Natural killer cell (primary cell): ENCODE measurements at regions of chr3 and their contacts with region 1.

Region 1: GRCh38 chr3:124620600-124621063 is 109.6 kb upstream of the UMPS start:
- DNase-seq: peak; percentile 17 to 41
- ATAC-seq: peak; percentile 81 to 90 (median 81)
- H3K4me3 ChIP-seq: no peak overlapping the region
- H3K4me3 Mint-ChIP-seq: peak overlapping the region; percentile 86
- H3K27ac ChIP-seq: peak overlapping the region; percentile 60
- H3K27ac Mint-ChIP-seq: peak overlapping the region; percentile 93 to 94
- H3K4me1 ChIP-seq: peaks cover 22% of the 10 kb centered on the region
- H3K4me1 Mint-ChIP-seq: peaks cover 39 to 44% of the 10 kb centered on the region in 2 donors
- H3K27me3 ChIP-seq: no peaks in the 10 kb centered on the region
- H3K27me3 Mint-ChIP-seq: no peaks in the 10 kb centered on the region
- CTCF ChIP-seq: no peak

Region 2: GRCh38 chr3:123971406-123971805 is 649.2 kb before region 1 on chr3:
- intact Hi-C with region 1: no loop called
- DNase-seq: no peak
- ATAC-seq: no peak
- H3K4me3 ChIP-seq: no peak overlapping the region
- H3K4me3 Mint-ChIP-seq: no peak overlapping the region
- H3K27ac ChIP-seq: no peak overlapping the region
- H3K27ac Mint-ChIP-seq: no peak overlapping the region
- H3K4me1 ChIP-seq: no peaks in the 10 kb centered on the region
- H3K4me1 Mint-ChIP-seq: no peaks in the 10 kb centered on the region
- H3K27me3 ChIP-seq: no peaks in the 10 kb centered on the region
- H3K27me3 Mint-ChIP-seq: peaks cover 28 to 57% of the 10 kb centered on the region in 2 donors
- CTCF ChIP-seq: no peak

Region 3: DNA sequence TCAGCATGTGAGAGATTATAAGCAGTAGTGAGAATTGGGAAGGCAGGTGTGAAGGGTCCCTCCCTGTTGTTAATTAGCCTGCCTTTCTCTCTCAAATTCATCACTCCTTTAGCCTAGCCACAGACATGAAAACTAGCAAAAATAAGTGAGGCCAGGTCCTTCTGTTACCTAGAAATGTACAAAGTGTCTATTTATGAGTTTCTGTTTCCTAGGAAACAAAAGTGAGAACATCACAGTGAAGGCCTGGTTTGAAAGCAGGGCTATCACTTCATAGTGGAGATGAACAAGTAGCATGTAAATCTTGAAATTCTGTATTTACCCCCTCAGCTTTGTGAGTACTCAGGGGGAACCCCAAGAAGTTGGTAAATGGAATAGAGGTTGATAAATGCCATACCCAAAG is 31.4 kb after region 1 on chr3:
- intact Hi-C with region 1: loop called (anchors 1 kb)
- DNase-seq: peak in 1 of 2 donors; percentile 9
- ATAC-seq: peak; percentile 78 to 84 (median 80)
- H3K4me3 ChIP-seq: no peak overlapping the region
- H3K4me3 Mint-ChIP-seq: peak overlapping the region; percentile 49
- H3K27ac ChIP-seq: peak overlapping the region; percentile 54
- H3K27ac Mint-ChIP-seq: peak overlapping the region; percentile 45 to 57
- H3K4me1 ChIP-seq: peaks cover 22% of the 10 kb centered on the region
- H3K4me1 Mint-ChIP-seq: peaks cover 47 to 53% of the 10 kb centered on the region in 2 donors
- H3K27me3 ChIP-seq: no peaks in the 10 kb centered on the region
- H3K27me3 Mint-ChIP-seq: peaks cover 5 to 7% of the 10 kb centered on the region in 2 donors
- CTCF ChIP-seq: no peak

Region 4: DNA sequence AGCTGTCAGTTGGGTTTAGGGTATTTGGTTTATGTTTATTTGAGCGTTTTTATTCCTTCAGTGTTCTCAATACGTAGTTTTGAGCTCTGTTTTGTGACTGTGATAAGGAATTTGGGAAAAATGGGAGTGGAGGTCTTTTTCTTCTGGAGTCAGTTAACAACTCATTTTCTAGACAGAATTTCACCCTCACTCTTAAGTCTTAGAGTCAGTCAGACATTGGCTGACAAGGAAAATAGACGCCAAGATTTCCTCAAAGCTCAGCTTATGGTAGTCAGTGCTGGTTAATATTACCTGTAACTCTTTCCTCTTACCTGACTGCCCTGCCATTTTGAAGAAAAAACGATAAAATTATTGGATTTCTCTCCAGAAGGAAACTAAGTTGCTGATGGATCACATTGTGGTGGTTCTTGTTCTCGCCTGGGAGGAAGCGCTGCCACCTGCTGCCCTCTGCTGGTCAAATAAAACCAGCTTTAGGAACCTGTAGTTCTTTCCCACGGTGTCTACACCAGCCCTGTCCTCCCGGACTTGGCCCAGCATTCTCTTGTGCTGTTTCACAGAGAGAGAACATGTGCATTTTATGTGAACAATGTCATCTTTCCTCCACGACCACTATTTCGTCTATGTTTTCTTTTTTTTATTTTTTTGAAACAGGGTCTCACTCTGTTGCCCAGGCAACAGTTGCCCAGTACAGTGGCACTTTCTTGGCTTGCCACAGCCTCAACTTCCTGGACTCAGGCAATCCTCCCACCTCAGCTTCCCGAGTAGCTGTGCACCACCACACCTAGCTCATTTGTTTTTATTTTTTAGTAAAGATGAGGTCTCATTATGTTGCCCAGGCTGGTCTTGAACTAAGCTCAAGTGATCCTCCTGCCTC is 68.2 kb after region 1 on chr3:
- intact Hi-C with region 1: loop called (anchors 1 kb)
- DNase-seq: peak; percentile 65 to 82
- ATAC-seq: peak; percentile 79 to 98 (median 97)
- H3K4me3 ChIP-seq: no peak overlapping the region
- H3K4me3 Mint-ChIP-seq: no peak overlapping the region
- H3K27ac ChIP-seq: no peak overlapping the region
- H3K27ac Mint-ChIP-seq: no peak overlapping the region
- H3K4me1 ChIP-seq: peaks cover 5% of the 10 kb centered on the region
- H3K4me1 Mint-ChIP-seq: peaks cover 6 to 12% of the 10 kb centered on the region in 2 donors
- H3K27me3 ChIP-seq: no peaks in the 10 kb centered on the region
- H3K27me3 Mint-ChIP-seq: peaks cover 0 to 3% of the 10 kb centered on the region in 2 donors
- CTCF ChIP-seq: peak; percentile 87